Endothelial cell of umbilical vein (primary cell): ENCODE measurements at regions of chr2 and their contacts with region 1.

Region 1: GRCh38 chr2:96856776-96857673 is 791 bp downstream of the ANKRD39 start:
- DNase-seq: peak; percentile 25
- H3K4me3 ChIP-seq: peak overlapping the region; percentile 10 to 53 (median 51)
- H3K27ac ChIP-seq: peak overlapping the region; percentile 10
- H3K4me1 ChIP-seq: peaks cover 9% of the 10 kb centered on the region
- H3K27me3 ChIP-seq: no peaks in the 10 kb centered on the region
- CTCF ChIP-seq: no peak
- POLR2A ChIP-seq: no peak

Region 2: GRCh38 chr2:96485751-96486651 is 371.0 kb before region 1 on chr2:
- CTCF ChIA-PET with region 1: no interaction called
- POLR2A ChIA-PET with region 1: no interaction called
- dilution Hi-C with region 1: no loop called
- intact Hi-C with region 1: no loop called
- DNase-seq: peak; percentile 94
- H3K4me3 ChIP-seq: peak overlapping the region in 2 of 3 experiments; percentile 23 to 24
- H3K27ac ChIP-seq: peak overlapping the region; percentile 36
- H3K4me1 ChIP-seq: peaks cover 6% of the 10 kb centered on the region
- H3K27me3 ChIP-seq: no peaks in the 10 kb centered on the region
- CTCF ChIP-seq: no peak
- POLR2A ChIP-seq: peak; percentile 30

Region 3: GRCh38 chr2:96806468-96807126 is 50.4 kb before region 1 on chr2:
- CTCF ChIA-PET with region 1: no interaction called
- POLR2A ChIA-PET with region 1: interaction called, 14 read pairs
- dilution Hi-C with region 1: no loop called
- intact Hi-C with region 1: no loop called
- DNase-seq: no peak
- H3K4me3 ChIP-seq: no peak overlapping the region
- H3K27ac ChIP-seq: no peak overlapping the region
- H3K4me1 ChIP-seq: no peaks in the 10 kb centered on the region
- H3K27me3 ChIP-seq: no peaks in the 10 kb centered on the region
- CTCF ChIP-seq: no peak
- POLR2A ChIP-seq: no peak

Region 4: GRCh38 chr2:96868555-96869280 is 11.7 kb after region 1 on chr2:
- CTCF ChIA-PET with region 1: interaction called, 81 read pairs
- POLR2A ChIA-PET with region 1: interaction called, 12 read pairs
- dilution Hi-C with region 1: no loop called
- intact Hi-C with region 1: loop called (anchors 1 kb)
- DNase-seq: peak; percentile 82
- H3K4me3 ChIP-seq: peak overlapping the region; percentile 59 to 86 (median 65)
- H3K27ac ChIP-seq: no peak overlapping the region
- H3K4me1 ChIP-seq: peaks cover 34% of the 10 kb centered on the region
- H3K27me3 ChIP-seq: peaks cover 10 to 16% of the 10 kb centered on the region in 2 experiments
- CTCF ChIP-seq: peak; percentile 70 to 73
- POLR2A ChIP-seq: peak; percentile 75

Region 5: GRCh38 chr2:96891491-96892333 is 34.7 kb after region 1 on chr2:
- CTCF ChIA-PET with region 1: interaction called, 15 read pairs
- POLR2A ChIA-PET with region 1: no interaction called
- dilution Hi-C with region 1: no loop called
- intact Hi-C with region 1: no loop called
- DNase-seq: peak; percentile 34
- H3K4me3 ChIP-seq: no peak overlapping the region
- H3K27ac ChIP-seq: no peak overlapping the region
- H3K4me1 ChIP-seq: no peaks in the 10 kb centered on the region
- H3K27me3 ChIP-seq: no peaks in the 10 kb centered on the region
- CTCF ChIP-seq: no peak
- POLR2A ChIP-seq: no peak

Region 6: GRCh38 chr2:96960153-96960961 is 103.3 kb after region 1 on chr2:
- CTCF ChIA-PET with region 1: interaction called, 19 read pairs
- POLR2A ChIA-PET with region 1: no interaction called
- dilution Hi-C with region 1: no loop called
- intact Hi-C with region 1: loop called (anchors 1 kb)
- DNase-seq: peak; percentile 73
- H3K4me3 ChIP-seq: no peak overlapping the region
- H3K27ac ChIP-seq: no peak overlapping the region
- H3K4me1 ChIP-seq: no peaks in the 10 kb centered on the region
- H3K27me3 ChIP-seq: no peaks in the 10 kb centered on the region
- CTCF ChIP-seq: peak; percentile 76 to 96
- POLR2A ChIP-seq: no peak